Cardiac septum (tissue), 1 donor: ENCODE measurements at regions of chr1 and their contacts with region 1.

Region 1: GRCh38 chr1:204763706-204764427 is 78.3 kb upstream of the LRRN2 start:
- DNase-seq: peak; percentile 86

Region 2: GRCh38 chr1:204565617-204566582 is 198.0 kb before region 1 on chr1:
- intact Hi-C with region 1: loop called (anchors 2 kb)
- DNase-seq: no peak